Lower leg skin (tissue), 4 donors: ENCODE measurements at regions of chr6 and their contacts with region 1.

Region 1: DNA sequence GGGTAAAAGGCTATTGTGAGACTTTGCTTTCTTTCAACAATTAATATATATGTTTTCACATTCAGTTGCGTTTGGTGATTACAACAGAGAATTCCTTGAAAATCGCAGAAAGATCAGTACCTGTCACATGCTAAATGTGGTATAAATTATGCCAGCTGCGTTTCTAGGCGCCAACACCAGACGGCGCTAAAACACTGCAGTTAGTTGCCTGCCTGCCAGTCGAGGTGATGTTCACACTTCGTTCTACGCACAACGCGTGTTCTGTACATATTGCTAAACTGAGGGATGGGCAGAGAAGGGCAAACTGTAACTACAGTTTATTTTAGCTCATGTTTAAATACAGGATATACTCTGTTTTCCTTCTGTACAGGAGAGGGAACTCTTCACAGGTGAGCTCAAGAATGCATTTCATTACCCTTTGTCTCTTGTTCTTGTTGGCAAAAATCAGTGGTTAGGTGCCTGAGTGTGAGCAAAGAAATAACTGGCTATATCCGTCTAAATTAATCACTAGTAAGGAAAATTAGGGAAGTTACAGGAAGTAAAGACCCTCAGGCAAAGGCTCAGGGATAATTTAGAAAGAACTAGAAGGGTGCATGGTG is 100.1 kb upstream of the RGS17 start:
- DNase-seq: no peak
- H3K4me3 ChIP-seq: no peak overlapping the region
- CTCF ChIP-seq: no peak
- POLR2A ChIP-seq: no peak

Region 2: GRCh38 chr6:153511896-153512496 is 280.8 kb after region 1 on chr6:
- intact Hi-C with region 1: loop called (anchors 5 kb)
- DNase-seq: no peak
- H3K4me3 ChIP-seq: no peak overlapping the region
- CTCF ChIP-seq: no peak
- POLR2A ChIP-seq: no peak